Activated T-helper 1 cell treated with anti-CD3 and anti-CD28 coated beads, Interleukin-12 subunit alpha, Interleukin-12 subunit beta, Interleukin-2, Interleukin-4 antibody, amounts not matched to agents 30 ng/mL and 10 ng/mL and 1 ng/mL, durations not matched to agents 14 hours and 24 hours and 36 hours (primary cell): ENCODE measurements at regions of chr11 and their contacts with region 1.

Region 1: DNA sequence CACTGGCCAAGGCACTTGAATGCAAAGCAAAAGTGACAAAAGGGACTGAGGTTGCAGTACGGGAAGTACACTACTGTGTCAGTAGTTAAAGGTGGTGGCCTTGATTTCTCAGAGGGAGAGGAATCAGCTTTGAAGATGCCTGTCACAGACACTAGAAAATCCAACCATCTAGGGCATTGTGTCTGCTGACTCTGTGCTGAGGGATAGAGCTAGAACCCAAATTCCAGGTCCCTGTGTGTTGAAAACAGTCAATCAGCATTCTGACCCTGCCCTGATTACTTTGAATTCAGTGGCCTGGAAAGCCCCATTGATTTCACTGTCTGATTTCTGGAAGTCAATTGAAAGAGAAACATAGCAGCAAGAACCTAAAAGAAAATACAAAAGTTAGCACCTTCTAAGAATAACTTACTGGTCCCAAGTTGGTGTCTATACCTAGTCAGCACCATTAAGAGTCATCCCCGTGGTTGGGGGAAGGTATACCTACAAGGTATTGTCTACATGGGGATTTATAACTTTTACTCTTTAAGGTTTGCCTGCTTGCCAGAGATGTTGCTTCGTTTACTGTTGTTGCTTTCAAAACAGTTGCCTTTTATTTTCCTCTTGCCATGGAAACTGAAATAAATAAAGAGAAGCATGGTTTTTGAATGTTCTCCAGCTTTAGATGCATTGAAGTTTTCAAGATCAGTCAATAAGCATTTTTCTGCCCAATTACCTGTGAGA is 97.3 kb downstream of the PDHX start:
- DNase-seq: peak; percentile 47
- H3K4me3 Mint-ChIP-seq: peak overlapping the region; percentile 51
- H3K27ac Mint-ChIP-seq: peak overlapping the region; percentile 88
- H3K4me1 Mint-ChIP-seq: peaks cover 53% of the 10 kb centered on the region
- H3K27me3 Mint-ChIP-seq: peaks cover 9% of the 10 kb centered on the region

Region 2: DNA sequence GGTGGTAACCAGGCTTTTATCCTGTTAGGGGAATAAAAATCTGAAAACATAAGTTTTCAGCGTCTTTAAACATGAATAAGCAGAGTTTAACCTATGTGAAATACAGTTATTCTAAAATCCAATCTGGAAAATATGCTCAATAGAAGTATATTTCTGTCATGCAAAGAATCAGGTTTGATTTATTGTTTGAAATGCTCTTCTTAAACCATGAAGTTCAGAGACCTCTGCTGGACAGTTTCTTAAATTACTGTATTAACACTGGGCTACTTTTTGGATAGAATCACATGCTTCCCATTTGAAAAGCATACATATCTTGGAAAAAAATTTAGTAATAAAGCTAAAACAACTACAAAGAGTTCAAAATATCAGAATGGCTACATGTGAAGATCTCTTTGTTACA is 122.9 kb before region 1 on chr11:
- intact Hi-C with region 1: no loop called
- DNase-seq: no peak
- H3K4me3 Mint-ChIP-seq: no peak overlapping the region
- H3K27ac Mint-ChIP-seq: no peak overlapping the region
- H3K4me1 Mint-ChIP-seq: no peaks in the 10 kb centered on the region
- H3K27me3 Mint-ChIP-seq: no peaks in the 10 kb centered on the region

Region 3: DNA sequence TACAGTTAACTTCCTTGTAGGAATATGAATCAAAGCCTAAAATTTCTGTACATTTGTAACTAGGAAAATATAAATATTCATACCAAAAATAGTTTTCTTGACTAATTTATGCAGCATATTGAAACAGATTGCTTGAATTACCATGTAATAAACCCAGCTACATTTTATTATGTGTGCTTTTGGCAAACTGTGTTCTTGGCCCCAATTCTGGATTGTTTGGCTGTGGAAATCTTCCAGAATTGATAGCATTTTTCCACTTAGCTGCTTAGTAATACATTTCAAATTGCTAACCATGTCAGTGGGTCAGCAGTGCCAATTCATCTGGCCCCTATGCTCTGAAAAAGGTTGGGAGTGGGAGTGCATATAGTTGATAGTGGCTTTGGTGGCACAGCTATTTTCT is 65.0 kb before region 1 on chr11:
- intact Hi-C with region 1: no loop called
- DNase-seq: no peak
- H3K4me3 Mint-ChIP-seq: no peak overlapping the region
- H3K27ac Mint-ChIP-seq: no peak overlapping the region
- H3K4me1 Mint-ChIP-seq: peaks cover 11% of the 10 kb centered on the region
- H3K27me3 Mint-ChIP-seq: no peaks in the 10 kb centered on the region

Region 4: GRCh38 chr11:35030716-35031213 is 17.1 kb after region 1 on chr11:
- intact Hi-C with region 1: loop called (anchors 1 kb)
- DNase-seq: no peak
- H3K4me3 Mint-ChIP-seq: peak overlapping the region; percentile 75
- H3K27ac Mint-ChIP-seq: peak overlapping the region; percentile 88
- H3K4me1 Mint-ChIP-seq: peaks cover 50% of the 10 kb centered on the region
- H3K27me3 Mint-ChIP-seq: peaks cover 8% of the 10 kb centered on the region

Region 5: GRCh38 chr11:35066783-35067423 is 53.2 kb after region 1 on chr11:
- intact Hi-C with region 1: loop called (anchors 1 kb)
- DNase-seq: peak; percentile 25
- H3K4me3 Mint-ChIP-seq: peak overlapping the region; percentile 8
- H3K27ac Mint-ChIP-seq: peak overlapping the region; percentile 66
- H3K4me1 Mint-ChIP-seq: peaks cover 31% of the 10 kb centered on the region
- H3K27me3 Mint-ChIP-seq: no peaks in the 10 kb centered on the region

Region 6: GRCh38 chr11:35144136-35144741 is 130.6 kb after region 1 on chr11:
- intact Hi-C with region 1: loop called (anchors 1 kb)
- DNase-seq: peak; percentile 69
- H3K4me3 Mint-ChIP-seq: peak overlapping the region; percentile 97
- H3K27ac Mint-ChIP-seq: peak overlapping the region; percentile 93
- H3K4me1 Mint-ChIP-seq: peaks cover 84% of the 10 kb centered on the region
- H3K27me3 Mint-ChIP-seq: no peaks in the 10 kb centered on the region

Region 7: GRCh38 chr11:35237860-35238715 is 224.4 kb after region 1 on chr11:
- intact Hi-C with region 1: loop called (anchors 5 kb)
- DNase-seq: peak; percentile 48
- H3K4me3 Mint-ChIP-seq: peak overlapping the region; percentile 42
- H3K27ac Mint-ChIP-seq: peak overlapping the region; percentile 36
- H3K4me1 Mint-ChIP-seq: peaks cover 67% of the 10 kb centered on the region
- H3K27me3 Mint-ChIP-seq: no peaks in the 10 kb centered on the region

Region 8: GRCh38 chr11:35305670-35306382 is 292.2 kb after region 1 on chr11:
- intact Hi-C with region 1: no loop called
- DNase-seq: no peak
- H3K4me3 Mint-ChIP-seq: no peak overlapping the region
- H3K27ac Mint-ChIP-seq: no peak overlapping the region
- H3K4me1 Mint-ChIP-seq: peaks cover 28% of the 10 kb centered on the region
- H3K27me3 Mint-ChIP-seq: peaks cover 4% of the 10 kb centered on the region

Region 9: GRCh38 chr11:36034551-36035331 is 1021.1 kb after region 1 on chr11:
- intact Hi-C with region 1: no loop called
- DNase-seq: no peak
- H3K4me3 Mint-ChIP-seq: no peak overlapping the region
- H3K27ac Mint-ChIP-seq: no peak overlapping the region
- H3K4me1 Mint-ChIP-seq: no peaks in the 10 kb centered on the region
- H3K27me3 Mint-ChIP-seq: peaks cover under 1% of the 10 kb centered on the region